ENCODE measurements at regions of chr16 and their contacts with region 1.

Region 1: DNA sequence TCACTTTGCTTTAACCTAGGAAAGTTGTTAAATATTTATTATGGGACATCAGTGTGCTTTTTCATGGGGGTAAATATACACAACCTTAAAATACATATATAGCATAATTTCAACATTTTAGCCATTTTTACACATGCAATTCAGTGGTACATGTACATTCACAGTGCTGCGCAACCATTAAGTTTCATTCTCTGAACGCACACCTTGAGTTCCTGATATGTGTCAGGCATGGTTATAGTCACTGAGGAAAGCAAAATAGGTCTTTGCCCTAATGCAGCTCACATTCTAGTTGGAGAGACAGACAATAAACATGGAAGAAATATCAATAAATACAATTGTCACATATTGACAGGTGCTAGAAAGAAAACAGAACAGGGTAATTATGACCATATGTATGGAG is 12.8 kb upstream of the CNEP1R1 start:
- DNase-seq: no peak
- H3K4me3 ChIP-seq: no peak overlapping the region
- H3K27ac ChIP-seq: no peak overlapping the region
- H3K4me1 ChIP-seq: no peaks in the 10 kb centered on the region
- H3K27me3 ChIP-seq: peaks cover 35% of the 10 kb centered on the region
- CTCF ChIP-seq: no peak

Region 2: GRCh38 chr16:50836121-50836621 is 824.0 kb after region 1 on chr16:
- CTCF ChIA-PET with region 1: no interaction called
- POLR2A ChIA-PET with region 1: interaction called, 16 read pairs
- intact Hi-C with region 1: no loop called
- DNase-seq: no peak
- H3K4me3 ChIP-seq: no peak overlapping the region
- H3K27ac ChIP-seq: no peak overlapping the region
- H3K4me1 ChIP-seq: no peaks in the 10 kb centered on the region
- H3K27me3 ChIP-seq: peaks cover 65% of the 10 kb centered on the region
- CTCF ChIP-seq: no peak